Mammary epithelial cell (primary cell): ENCODE measurements at regions of chr9 and their contacts with region 1.

Region 1: DNA sequence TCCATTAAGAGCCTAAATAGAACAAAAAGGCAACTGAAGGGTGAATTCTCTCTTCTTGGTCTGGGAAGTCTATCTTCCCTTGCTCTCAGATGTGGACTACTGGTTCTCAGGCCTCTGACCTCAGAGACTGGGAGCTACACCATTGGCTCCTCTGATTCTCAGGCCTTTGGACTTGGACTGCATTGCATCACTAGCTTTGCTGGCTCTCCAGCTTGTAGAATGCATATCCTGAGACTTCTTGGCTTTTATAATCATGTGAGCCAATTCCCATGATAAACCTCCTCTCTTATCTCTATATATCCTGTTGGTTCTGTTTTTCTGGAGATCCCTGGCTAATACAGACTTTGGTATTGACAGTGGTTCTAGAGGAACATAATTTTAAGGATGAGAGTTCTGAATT is 89.8 kb downstream of the PSAT1 start:
- DNase-seq: no peak
- H3K4me3 ChIP-seq: no peak overlapping the region
- H3K27ac ChIP-seq: no peak overlapping the region
- H3K4me1 ChIP-seq: no peaks in the 10 kb centered on the region
- H3K27me3 ChIP-seq: no peaks in the 10 kb centered on the region
- CTCF ChIP-seq: no peak

Region 2: DNA sequence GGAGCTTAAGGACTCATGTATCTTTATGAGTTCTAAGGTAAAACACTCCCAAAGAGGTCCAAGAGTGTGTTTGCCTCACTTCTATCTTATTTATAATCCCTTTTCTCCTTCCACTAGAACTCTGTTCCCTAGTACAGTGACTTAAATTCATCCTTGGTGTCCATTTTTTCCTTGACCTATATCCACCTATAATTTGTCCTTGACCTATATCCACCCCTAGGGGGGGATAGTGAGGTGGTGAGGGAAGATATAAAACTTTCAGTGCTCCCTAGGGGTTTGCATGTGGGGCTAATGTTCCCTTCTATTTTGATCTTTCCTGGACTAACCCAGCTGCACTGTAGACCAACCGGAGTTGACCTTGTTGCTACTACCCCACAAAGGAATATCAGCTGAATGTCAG is 271.7 kb before region 1 on chr9:
- CTCF ChIA-PET with region 1: no interaction called
- dilution Hi-C with region 1: no loop called
- in situ Hi-C with region 1: no loop called
- intact Hi-C with region 1: no loop called
- DNase-seq: no peak
- H3K4me3 ChIP-seq: no peak overlapping the region
- H3K27ac ChIP-seq: no peak overlapping the region
- H3K4me1 ChIP-seq: peaks cover 18% of the 10 kb centered on the region
- H3K27me3 ChIP-seq: no peaks in the 10 kb centered on the region
- CTCF ChIP-seq: peak; percentile 34 to 36

Region 3: DNA sequence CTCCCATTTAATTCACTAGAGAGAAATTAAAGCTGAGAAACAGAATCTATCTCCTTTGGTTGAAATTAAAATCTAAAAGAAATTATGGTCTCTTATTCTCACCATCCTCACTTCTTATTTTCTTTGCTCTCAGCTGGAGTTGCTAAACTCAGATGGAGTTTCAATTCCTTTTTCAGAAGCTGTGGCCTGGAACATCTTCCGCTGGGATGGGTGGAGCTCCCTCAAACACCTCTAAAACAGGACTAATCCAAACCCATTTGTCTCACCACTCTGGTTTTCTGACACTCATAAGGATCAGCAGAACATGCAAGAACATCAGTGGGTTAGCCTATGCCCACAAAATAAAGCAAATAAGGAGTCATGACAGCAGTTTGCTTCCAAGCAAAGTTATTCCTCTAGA is 190.5 kb before region 1 on chr9:
- CTCF ChIA-PET with region 1: no interaction called
- dilution Hi-C with region 1: no loop called
- in situ Hi-C with region 1: no loop called
- intact Hi-C with region 1: no loop called
- DNase-seq: no peak
- H3K4me3 ChIP-seq: no peak overlapping the region
- H3K27ac ChIP-seq: no peak overlapping the region
- H3K4me1 ChIP-seq: no peaks in the 10 kb centered on the region
- H3K27me3 ChIP-seq: no peaks in the 10 kb centered on the region
- CTCF ChIP-seq: no peak

Region 4: GRCh38 chr9:78314953-78315870 is 71.6 kb before region 1 on chr9:
- CTCF ChIA-PET with region 1: no interaction called
- dilution Hi-C with region 1: loop called (anchors 5 kb)
- in situ Hi-C with region 1: no loop called
- intact Hi-C with region 1: no loop called
- DNase-seq: no peak
- H3K4me3 ChIP-seq: no peak overlapping the region
- H3K27ac ChIP-seq: no peak overlapping the region
- H3K4me1 ChIP-seq: no peaks in the 10 kb centered on the region
- H3K27me3 ChIP-seq: no peaks in the 10 kb centered on the region
- CTCF ChIP-seq: no peak

Region 5: GRCh38 chr9:79512249-79512648 is 1125.5 kb after region 1 on chr9:
- CTCF ChIA-PET with region 1: no interaction called
- dilution Hi-C with region 1: no loop called
- in situ Hi-C with region 1: no loop called
- intact Hi-C with region 1: no loop called
- DNase-seq: no peak
- H3K4me3 ChIP-seq: no peak overlapping the region
- H3K27ac ChIP-seq: no peak overlapping the region
- H3K4me1 ChIP-seq: no peaks in the 10 kb centered on the region
- H3K27me3 ChIP-seq: no peaks in the 10 kb centered on the region
- CTCF ChIP-seq: no peak